Endothelial cell of umbilical vein (primary cell): ENCODE measurements at regions of chr3 and their contacts with region 1.

Region 1: DNA sequence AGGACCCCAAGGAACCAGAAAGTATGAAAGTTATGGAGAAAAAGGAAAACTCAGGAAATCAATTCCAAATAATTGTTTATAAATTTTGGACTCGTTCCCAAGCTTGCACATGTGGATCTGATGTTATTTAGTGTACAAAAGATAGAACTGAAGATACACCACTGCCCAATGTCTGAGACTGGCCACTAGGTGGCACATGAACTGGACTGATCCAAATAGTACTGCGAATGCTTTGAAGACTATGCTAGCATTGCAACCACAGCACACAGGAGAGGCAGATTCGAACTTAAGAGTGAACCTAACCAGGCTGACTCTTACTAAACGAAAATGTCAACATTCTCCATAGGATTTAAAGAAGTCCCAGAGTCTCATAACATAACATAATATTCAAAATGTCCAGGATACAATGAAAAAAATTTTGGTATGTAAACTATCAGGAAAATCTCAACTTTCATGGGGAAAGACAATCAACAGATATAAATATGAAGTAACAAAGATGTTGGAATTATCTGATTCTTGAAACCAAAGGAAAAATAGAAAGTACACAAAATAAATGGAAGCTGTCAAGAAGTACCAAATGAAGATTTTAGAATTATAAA is 596.7 kb downstream of the FGF12 start:
- DNase-seq: peak; percentile 61
- H3K4me3 ChIP-seq: no peak overlapping the region
- H3K27ac ChIP-seq: no peak overlapping the region
- H3K4me1 ChIP-seq: no peaks in the 10 kb centered on the region
- H3K27me3 ChIP-seq: no peaks in the 10 kb centered on the region
- CTCF ChIP-seq: peak; percentile 72 to 78
- POLR2A ChIP-seq: no peak

Region 2: DNA sequence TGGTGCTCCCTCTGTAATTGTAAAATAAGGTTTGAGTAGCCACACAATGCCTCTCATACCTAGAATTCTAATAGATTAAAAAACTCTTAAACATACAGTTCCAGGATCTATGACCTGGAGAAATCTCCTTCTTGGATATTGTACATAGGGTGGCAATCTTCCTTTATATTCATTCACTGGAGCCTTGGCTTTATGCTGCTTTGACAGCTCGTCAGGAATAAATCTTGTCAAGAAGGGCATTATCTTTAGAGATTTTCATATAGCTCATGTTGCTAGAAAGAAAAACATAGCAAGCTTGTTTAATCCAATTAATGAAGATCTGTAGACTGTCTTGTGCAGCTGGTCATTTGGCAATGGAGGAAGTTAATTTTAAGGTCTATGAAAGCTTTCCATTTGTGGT is 538.5 kb before region 1 on chr3:
- CTCF ChIA-PET with region 1: no interaction called
- POLR2A ChIA-PET with region 1: no interaction called
- dilution Hi-C with region 1: no loop called
- intact Hi-C with region 1: no loop called
- DNase-seq: no peak
- H3K4me3 ChIP-seq: no peak overlapping the region
- H3K27ac ChIP-seq: no peak overlapping the region
- H3K4me1 ChIP-seq: no peaks in the 10 kb centered on the region
- H3K27me3 ChIP-seq: no peaks in the 10 kb centered on the region
- CTCF ChIP-seq: no peak
- POLR2A ChIP-seq: no peak

Region 3: DNA sequence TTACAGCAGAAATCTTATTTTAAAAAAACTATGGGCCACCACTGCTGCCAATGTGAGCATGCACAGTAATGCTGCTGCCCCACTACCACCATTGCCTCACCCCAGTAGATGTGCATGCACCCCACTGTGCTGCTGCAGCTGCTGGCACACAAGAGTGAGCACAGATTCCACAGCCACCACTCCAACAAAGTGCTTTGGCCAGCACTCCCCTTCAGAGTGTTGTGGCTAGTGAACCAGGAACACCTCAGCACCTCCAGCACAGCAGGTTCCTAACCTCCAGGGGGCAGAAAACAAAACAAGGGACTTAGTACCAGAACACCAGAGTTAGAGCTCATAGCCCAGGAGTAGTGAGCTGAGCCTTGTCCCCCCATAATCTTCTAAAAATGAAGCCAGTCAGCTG is 40.0 kb before region 1 on chr3:
- CTCF ChIA-PET with region 1: no interaction called
- POLR2A ChIA-PET with region 1: no interaction called
- dilution Hi-C with region 1: no loop called
- intact Hi-C with region 1: no loop called
- DNase-seq: no peak
- H3K4me3 ChIP-seq: no peak overlapping the region
- H3K27ac ChIP-seq: no peak overlapping the region
- H3K4me1 ChIP-seq: no peaks in the 10 kb centered on the region
- H3K27me3 ChIP-seq: no peaks in the 10 kb centered on the region
- CTCF ChIP-seq: no peak
- POLR2A ChIP-seq: no peak

Region 4: GRCh38 chr3:192188218-192188835 is 57.7 kb after region 1 on chr3:
- CTCF ChIA-PET with region 1: no interaction called
- POLR2A ChIA-PET with region 1: no interaction called
- dilution Hi-C with region 1: no loop called
- intact Hi-C with region 1: loop called (anchors 2 kb)
- DNase-seq: peak; percentile 46
- H3K4me3 ChIP-seq: no peak overlapping the region
- H3K27ac ChIP-seq: no peak overlapping the region
- H3K4me1 ChIP-seq: peaks cover 13% of the 10 kb centered on the region
- H3K27me3 ChIP-seq: no peaks in the 10 kb centered on the region
- CTCF ChIP-seq: peak; percentile 72 to 73
- POLR2A ChIP-seq: no peak